A549 (cell line): ENCODE measurements at regions of chr10 and their contacts with region 1.

Region 1: GRCh38 chr10:67779465-67780203 is 58.4 kb downstream of the DNAJC12 start:
- DNase-seq: peak; percentile 62 to 87
- ATAC-seq: peak; percentile 78 to 89
- H3K4me3 ChIP-seq: no peak overlapping the region
- H3K27ac ChIP-seq: no peak overlapping the region
- H3K4me1 ChIP-seq: 0 out of 3 replicates have a peak, but pooled peaks cover 4% of the 10 kb centered on the region
- CTCF ChIP-seq: peak; percentile 93
- EP300 ChIP-seq: no peak
- POLR2A ChIP-seq: no peak
- RAD21 ChIP-seq: peak; percentile 92 to 96

Region 2: GRCh38 chr10:67666416-67667034 is 113.1 kb before region 1 on chr10:
- CTCF ChIA-PET with region 1: interaction called, 44 read pairs
- POLR2A ChIA-PET with region 1: interaction called, 4 read pairs
- DNase-seq: peak; percentile 22 to 72
- ATAC-seq: peak; percentile 77 to 82
- H3K4me3 ChIP-seq: no peak overlapping the region
- H3K27ac ChIP-seq: peak overlapping the region in 1 of 2 experiments; percentile 22; a peak in 2 of 6 replicates
- H3K4me1 ChIP-seq: peaks cover 19% of the 10 kb centered on the region; the same call in 2 of the 3 replicates
- CTCF ChIP-seq: peak; percentile 65
- EP300 ChIP-seq: no peak
- POLR2A ChIP-seq: no peak
- RAD21 ChIP-seq: peak; percentile 65 to 70

Region 3: GRCh38 chr10:67697724-67698131 is 81.9 kb before region 1 on chr10:
- CTCF ChIA-PET with region 1: interaction called, 143 read pairs
- POLR2A ChIA-PET with region 1: interaction called, 3 read pairs
- DNase-seq: peak; percentile 58 to 63
- ATAC-seq: peak; percentile 89 to 91; a peak in 5 of 6 replicates
- H3K4me3 ChIP-seq: no peak overlapping the region
- H3K27ac ChIP-seq: no peak overlapping the region
- H3K4me1 ChIP-seq: no peaks in the 10 kb centered on the region
- CTCF ChIP-seq: peak; percentile 72
- EP300 ChIP-seq: no peak
- POLR2A ChIP-seq: no peak
- RAD21 ChIP-seq: peak; percentile 63 to 65

Region 4: DNA sequence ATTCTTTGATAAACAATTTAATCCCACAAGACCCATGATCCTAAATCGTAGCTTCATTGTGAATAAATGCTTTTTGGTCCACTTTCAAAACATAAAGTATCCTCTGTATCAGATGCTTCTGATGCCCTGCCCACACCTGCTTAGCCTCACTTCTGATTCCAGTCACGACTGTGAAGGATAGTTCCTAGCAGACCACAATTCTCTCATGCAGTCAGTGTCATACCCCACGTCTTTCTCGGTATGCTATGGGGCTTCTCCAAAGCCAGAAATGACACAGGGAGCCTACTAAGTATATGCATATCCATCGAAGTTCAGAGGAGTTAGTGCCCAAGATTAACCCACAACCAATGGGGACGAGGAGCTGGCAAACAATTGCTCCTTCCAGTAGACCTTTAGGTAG is 56.0 kb before region 1 on chr10:
- CTCF ChIA-PET with region 1: interaction called, 10 read pairs
- POLR2A ChIA-PET with region 1: no interaction called
- DNase-seq: no peak
- ATAC-seq: no peak
- H3K4me3 ChIP-seq: no peak overlapping the region
- H3K27ac ChIP-seq: no peak overlapping the region
- H3K4me1 ChIP-seq: no peaks in the 10 kb centered on the region
- CTCF ChIP-seq: no peak
- EP300 ChIP-seq: no peak
- POLR2A ChIP-seq: no peak
- RAD21 ChIP-seq: no peak

Region 5: DNA sequence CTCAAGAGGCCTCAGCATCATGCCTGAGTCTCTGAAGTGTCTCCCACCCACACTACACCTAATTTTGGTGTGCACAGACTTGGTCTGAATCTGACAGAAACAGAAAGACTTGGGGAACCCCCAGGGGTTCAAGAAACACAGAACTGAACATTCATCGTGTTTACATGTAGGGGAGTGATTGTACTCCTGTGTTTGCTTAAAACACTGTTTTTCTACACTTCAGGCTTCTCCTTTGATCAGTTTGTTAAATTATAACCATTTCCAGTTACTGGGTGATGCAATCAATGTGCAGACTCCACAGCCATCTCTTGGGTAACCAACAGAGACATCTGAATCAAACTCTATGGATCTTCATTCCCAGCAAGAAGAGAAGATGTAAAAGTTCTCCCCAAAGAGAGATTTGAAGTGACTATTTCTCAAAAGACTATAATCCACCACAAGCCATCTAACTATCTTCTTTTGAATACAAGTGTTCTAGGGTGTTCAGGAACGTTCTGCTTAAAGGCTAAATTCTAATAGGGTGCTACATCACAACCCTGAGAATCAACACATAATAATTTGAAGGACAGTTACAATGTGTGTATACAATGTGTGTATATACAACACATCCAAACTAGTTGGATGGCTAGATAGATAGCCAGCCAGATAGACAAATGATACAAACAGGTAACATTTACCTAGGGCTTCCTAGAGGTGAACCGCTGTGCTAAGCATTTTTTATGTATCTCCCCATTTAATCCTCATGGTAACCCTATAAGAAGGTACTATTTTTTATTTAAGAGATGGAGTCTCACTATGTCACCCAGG is 24.2 kb after region 1 on chr10:
- CTCF ChIA-PET with region 1: interaction called, 14 read pairs
- POLR2A ChIA-PET with region 1: no interaction called
- DNase-seq: peak; percentile 25 to 75
- ATAC-seq: peak; percentile 43 to 73; a peak in 4 of 6 replicates
- H3K4me3 ChIP-seq: no peak overlapping the region
- H3K27ac ChIP-seq: peak overlapping the region; percentile 56 to 68
- H3K4me1 ChIP-seq: peaks cover 24% of the 10 kb centered on the region
- CTCF ChIP-seq: no peak
- EP300 ChIP-seq: peak; percentile 79 to 84; a peak in 4 of 5 replicates
- POLR2A ChIP-seq: no peak
- RAD21 ChIP-seq: peak in 1 of 2 experiments; percentile 41; a peak in 2 of 5 replicates